Activated CD8-positive, alpha-beta T cell treated with anti-CD3 and anti-CD28 coated beads, Interleukin-2, amount 10 ng/mL, durations not matched to agents 7 days and 5 days (primary cell): ENCODE measurements at regions of chr14 and their contacts with region 1.

Region 1: GRCh38 chr14:90758028-90758889 is 58.0 kb downstream of the TTC7B start:
- DNase-seq: peak; percentile 94
- ATAC-seq: peak; percentile 96
- H3K4me3 Mint-ChIP-seq: peak overlapping the region; percentile 68
- H3K27ac Mint-ChIP-seq: peak overlapping the region; percentile 83
- H3K4me1 Mint-ChIP-seq: peaks cover 13% of the 10 kb centered on the region
- H3K27me3 Mint-ChIP-seq: peaks cover 32% of the 10 kb centered on the region

Region 2: DNA sequence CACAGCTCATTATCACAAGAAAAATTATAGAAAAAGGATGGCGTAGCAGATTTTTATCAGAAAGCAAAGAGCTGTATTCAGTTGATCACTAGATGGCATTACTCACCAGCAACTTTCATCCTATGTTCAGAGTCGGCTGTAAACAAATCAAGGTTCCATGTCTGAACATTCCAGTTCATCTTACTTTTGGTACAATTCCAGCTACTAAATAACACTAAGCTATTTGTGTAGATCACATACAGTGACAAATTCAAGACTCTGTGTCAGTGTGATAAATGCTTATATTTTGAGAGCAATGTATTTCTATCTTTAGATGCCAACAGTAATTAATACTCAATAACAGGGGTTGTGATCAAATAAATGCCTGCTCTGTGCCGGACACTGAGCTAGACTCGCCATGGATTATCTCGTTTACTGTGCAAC is 456.6 kb before region 1 on chr14:
- CTCF ChIA-PET with region 1: interaction called, 13 read pairs
- POLR2A ChIA-PET with region 1: no interaction called
- DNase-seq: no peak
- ATAC-seq: no peak
- H3K4me3 Mint-ChIP-seq: no peak overlapping the region
- H3K27ac Mint-ChIP-seq: no peak overlapping the region
- H3K4me1 Mint-ChIP-seq: peaks cover 10% of the 10 kb centered on the region
- H3K27me3 Mint-ChIP-seq: no peaks in the 10 kb centered on the region

Region 3: GRCh38 chr14:90399541-90400444 is 358.5 kb before region 1 on chr14:
- CTCF ChIA-PET with region 1: interaction called, 17 read pairs
- POLR2A ChIA-PET with region 1: interaction called, 5 read pairs
- DNase-seq: peak; percentile 93
- ATAC-seq: peak; percentile 52
- H3K4me3 Mint-ChIP-seq: peak overlapping the region; percentile 92
- H3K27ac Mint-ChIP-seq: peak overlapping the region; percentile 97
- H3K4me1 Mint-ChIP-seq: peaks cover 47% of the 10 kb centered on the region
- H3K27me3 Mint-ChIP-seq: no peaks in the 10 kb centered on the region

Region 4: DNA sequence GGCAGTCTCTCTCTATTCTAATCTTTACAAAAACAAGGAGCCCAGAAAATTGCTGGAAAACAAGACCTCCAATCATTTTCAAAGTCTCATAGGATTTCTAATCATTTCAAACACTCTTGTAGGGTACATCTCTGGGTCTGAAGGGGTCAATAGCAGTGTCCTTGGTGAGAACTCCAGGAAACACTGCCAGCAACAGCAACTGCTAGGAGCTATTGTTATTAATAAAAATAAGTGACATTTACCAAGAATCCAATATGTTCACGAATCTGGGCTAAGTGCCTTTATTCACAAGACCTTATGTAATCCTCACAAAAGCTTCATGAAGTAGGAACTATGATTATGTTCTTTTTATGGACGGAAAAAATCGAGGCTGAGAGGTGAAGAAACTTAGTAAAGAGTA is 14.8 kb before region 1 on chr14:
- CTCF ChIA-PET with region 1: interaction called, 31 read pairs
- POLR2A ChIA-PET with region 1: no interaction called
- DNase-seq: no peak
- ATAC-seq: no peak
- H3K4me3 Mint-ChIP-seq: no peak overlapping the region
- H3K27ac Mint-ChIP-seq: no peak overlapping the region
- H3K4me1 Mint-ChIP-seq: no peaks in the 10 kb centered on the region
- H3K27me3 Mint-ChIP-seq: peaks cover 15% of the 10 kb centered on the region

Region 5: DNA sequence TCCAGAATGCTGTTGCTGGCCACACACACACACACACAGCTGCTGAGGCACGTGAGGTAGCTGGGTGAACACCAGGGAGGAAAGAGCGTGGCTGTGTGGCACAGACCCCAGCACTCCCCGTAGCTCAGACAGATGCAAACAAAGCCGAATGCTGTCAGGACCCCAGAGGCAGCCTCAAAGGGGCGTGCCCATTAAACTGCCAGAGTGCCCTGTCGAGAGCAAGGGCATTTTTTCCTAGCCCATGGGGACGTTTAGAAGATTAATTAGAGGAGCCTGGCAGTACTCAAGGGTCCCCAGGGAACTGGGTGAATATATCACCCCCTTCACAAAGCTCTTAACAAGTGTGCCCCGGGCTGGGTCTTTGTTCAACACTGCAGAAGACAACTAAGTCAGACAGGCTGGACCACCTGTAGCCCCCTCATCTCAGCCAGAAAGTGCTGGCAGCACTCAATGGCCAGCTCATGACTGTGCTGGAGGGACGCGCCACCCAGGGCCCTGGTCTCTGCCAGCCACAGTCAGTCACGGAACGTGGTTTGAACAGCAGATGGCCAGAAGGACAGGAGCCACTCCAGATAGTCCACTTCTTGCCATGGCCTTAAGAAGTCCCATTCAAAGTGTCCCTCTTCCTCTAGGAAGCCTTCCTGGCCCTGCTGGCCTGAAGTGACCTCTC is 20.4 kb after region 1 on chr14:
- CTCF ChIA-PET with region 1: interaction called, 10 read pairs
- POLR2A ChIA-PET with region 1: no interaction called
- DNase-seq: no peak
- ATAC-seq: no peak
- H3K4me3 Mint-ChIP-seq: no peak overlapping the region
- H3K27ac Mint-ChIP-seq: no peak overlapping the region
- H3K4me1 Mint-ChIP-seq: no peaks in the 10 kb centered on the region
- H3K27me3 Mint-ChIP-seq: no peaks in the 10 kb centered on the region